ENCODE measurements at regions of chr12 and their contacts with region 1.

Region 1: DNA sequence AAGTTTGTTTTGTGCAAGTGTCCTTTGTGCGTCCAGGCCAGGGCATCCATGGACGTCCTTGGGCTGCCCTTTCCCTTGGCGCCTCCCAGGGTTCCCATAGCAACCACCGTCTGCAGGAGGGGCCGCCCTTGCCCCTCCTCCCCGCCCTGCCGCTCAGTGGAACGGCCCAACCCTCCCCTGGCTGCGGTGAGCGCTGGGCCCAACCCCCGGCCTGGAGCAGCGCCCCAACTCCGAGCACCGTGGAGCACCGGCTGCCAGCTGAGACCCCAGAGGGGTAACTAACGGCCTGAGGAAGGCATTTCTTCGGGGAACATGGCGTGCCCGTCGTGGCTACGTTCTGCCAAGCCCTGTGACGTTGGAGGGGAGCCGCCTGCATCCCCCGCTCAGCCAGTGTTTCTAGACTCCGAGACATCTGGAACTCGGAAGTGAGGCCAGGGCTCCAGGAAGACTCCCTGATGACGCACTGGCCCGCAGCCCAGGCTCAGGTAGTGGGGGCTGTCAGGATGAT is 5.3 kb upstream of the ACACB start:
- DNase-seq: peak; percentile 94 to 96
- ATAC-seq: peak; percentile 96
- H3K4me3 ChIP-seq: peak overlapping the region; percentile 23 to 30
- H3K27ac ChIP-seq: peak overlapping the region in 1 of 2 donors; percentile 25
- H3K4me1 ChIP-seq: no peaks in the 10 kb centered on the region
- H3K27me3 ChIP-seq: no peaks in the 10 kb centered on the region

Region 2: GRCh38 chr12:109069307-109070231 is 41.5 kb before region 1 on chr12:
- intact Hi-C with region 1: no loop called
- DNase-seq: no peak
- ATAC-seq: no peak
- H3K4me3 ChIP-seq: no peak overlapping the region
- H3K27ac ChIP-seq: no peak overlapping the region
- H3K4me1 ChIP-seq: no peaks in the 10 kb centered on the region
- H3K27me3 ChIP-seq: no peaks in the 10 kb centered on the region

Region 3: GRCh38 chr12:109147954-109148353 is 36.9 kb after region 1 on chr12:
- intact Hi-C with region 1: loop called (anchors 5 kb)
- DNase-seq: no peak
- ATAC-seq: peak; percentile 77
- H3K4me3 ChIP-seq: no peak overlapping the region
- H3K27ac ChIP-seq: no peak overlapping the region
- H3K4me1 ChIP-seq: no peaks in the 10 kb centered on the region
- H3K27me3 ChIP-seq: no peaks in the 10 kb centered on the region

Region 4: DNA sequence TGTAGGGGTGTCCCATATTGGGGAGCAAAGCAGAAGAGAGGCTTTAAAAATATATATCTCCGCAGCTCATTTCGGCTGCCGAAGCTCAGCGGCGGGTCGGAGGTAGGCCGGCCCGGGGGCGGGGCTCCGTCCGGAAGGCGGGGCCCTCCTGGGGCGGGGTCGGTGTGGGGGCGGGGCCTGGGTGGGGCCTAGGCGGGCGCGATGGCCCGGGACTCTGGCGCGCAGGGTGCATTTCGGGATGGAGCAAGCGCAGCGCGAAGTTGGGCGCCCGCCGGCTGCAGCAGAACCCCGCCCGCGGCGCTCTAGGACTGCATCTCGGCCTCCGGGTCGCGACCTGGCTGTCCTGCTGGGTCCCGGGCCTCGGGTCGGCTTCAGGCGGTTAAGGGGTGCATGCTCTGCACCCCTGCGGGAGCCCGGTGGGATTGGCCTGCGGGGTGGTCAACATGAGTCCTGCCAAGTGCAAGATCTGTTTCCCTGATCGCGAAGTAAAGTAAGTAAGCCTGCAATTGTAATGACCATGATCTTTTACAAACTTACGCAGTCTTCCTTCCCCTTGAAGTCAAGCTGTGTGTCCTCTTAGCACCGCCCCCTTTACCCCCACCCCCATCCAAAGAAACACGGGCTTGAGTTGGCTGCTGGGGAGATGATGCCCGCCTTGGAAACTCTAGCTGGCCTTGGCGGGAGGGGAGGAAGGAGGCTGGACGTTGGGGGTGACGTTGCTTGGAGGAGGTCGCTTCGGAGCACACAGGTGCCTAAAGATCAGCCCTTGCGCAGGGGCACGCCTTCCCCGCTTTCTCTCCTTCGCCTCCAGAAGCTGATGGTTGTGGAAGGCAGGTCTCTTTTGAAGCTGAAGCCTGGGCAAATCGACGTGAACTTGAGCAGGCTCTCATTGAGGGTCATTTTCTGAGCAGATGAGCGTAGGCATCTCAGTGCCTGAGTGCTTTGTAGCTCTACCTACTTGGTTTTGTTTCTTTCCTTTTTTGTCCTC is 43.7 kb after region 1 on chr12:
- intact Hi-C with region 1: loop called (anchors 5 kb)
- DNase-seq: peak; percentile 87 to 95
- ATAC-seq: peak; percentile 96
- H3K4me3 ChIP-seq: peak overlapping the region; percentile 47 to 84
- H3K27ac ChIP-seq: peak overlapping the region in 1 of 2 donors; percentile 71
- H3K4me1 ChIP-seq: no peaks in the 10 kb centered on the region
- H3K27me3 ChIP-seq: no peaks in the 10 kb centered on the region

Region 5: GRCh38 chr12:109385339-109386067 is 274.5 kb after region 1 on chr12:
- intact Hi-C with region 1: loop called in 1 of 2 experiments (anchors 10 kb)
- DNase-seq: peak in 1 of 2 donors; percentile 48
- ATAC-seq: peak; percentile 48
- H3K4me3 ChIP-seq: no peak overlapping the region
- H3K27ac ChIP-seq: no peak overlapping the region
- H3K4me1 ChIP-seq: no peaks in the 10 kb centered on the region
- H3K27me3 ChIP-seq: peaks cover 0 to 5% of the 10 kb centered on the region in 2 donors

Measured in aorta (tissue), 5 donors.